Activated CD8-positive, alpha-beta T cell treated with anti-CD3 and anti-CD28 coated beads, Interleukin-2, amount 10 ng/mL, durations not matched to agents 7 days and 5 days (primary cell): ENCODE measurements at regions of chrX and their contacts with region 1.

Region 1: DNA sequence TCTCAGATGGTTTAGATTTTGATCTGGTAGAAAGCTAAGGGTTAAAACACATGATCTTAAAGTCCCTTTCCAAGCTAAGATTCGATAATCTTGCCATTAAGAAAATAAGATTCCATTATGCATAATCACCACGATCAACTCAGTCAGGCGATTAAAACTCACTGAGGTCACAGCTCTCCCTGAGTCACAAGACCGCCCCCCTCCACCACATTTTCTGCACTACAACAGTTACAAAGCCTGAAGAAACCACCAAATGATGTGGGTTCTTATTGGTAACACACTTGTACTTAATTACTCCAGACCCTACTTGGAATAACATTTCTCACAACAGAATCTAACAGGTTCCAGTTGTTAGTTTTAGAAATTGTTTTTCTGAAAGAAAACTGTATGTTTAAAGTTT is 62.8 kb downstream of the SH3KBP1 start:
- DNase-seq: peak; percentile 37
- ATAC-seq: peak; percentile 39
- H3K4me3 Mint-ChIP-seq: no peak overlapping the region
- H3K27ac Mint-ChIP-seq: no peak overlapping the region
- H3K4me1 Mint-ChIP-seq: peaks cover 39% of the 10 kb centered on the region
- H3K27me3 Mint-ChIP-seq: no peaks in the 10 kb centered on the region

Region 2: DNA sequence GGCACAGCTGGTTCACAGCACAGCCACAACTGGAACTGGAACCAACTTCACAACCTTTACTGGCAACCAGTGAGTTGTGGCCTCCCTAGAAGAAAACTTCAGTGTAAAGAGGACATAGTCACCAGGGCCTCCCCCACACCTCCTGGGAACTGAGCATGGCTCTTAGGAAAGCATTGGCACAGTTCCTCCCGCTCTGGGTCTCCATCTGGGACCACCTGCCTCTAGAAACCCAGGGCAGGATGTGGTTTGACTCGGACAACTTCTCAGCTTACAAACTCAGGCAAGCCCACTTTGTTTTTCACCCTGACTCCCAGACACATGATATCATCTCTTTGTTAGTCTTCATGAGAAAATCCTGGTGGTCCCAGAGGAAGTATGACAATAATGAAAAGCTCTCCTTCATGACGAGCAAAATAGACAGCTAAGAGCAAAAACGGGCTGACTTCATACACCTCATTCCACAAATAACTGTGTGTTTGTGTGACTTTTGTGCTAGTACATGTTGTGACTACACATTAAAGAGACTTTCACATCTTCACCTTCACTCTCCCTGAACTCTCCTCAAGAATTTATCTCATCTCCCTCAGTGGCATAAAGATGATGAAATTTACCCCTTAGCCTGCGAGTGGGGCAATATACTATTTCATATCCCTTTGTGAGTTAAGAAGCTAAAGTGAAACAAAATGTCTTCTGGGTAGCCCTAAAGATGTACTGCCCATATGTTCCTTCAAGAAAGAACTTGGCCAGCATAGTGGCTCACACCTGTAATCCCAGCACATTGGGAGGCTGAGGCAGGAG is 12.6 kb before region 1 on chrX:
- CTCF ChIA-PET with region 1: interaction called, 12 read pairs
- POLR2A ChIA-PET with region 1: no interaction called
- DNase-seq: no peak
- ATAC-seq: peak; percentile 56
- H3K4me3 Mint-ChIP-seq: no peak overlapping the region
- H3K27ac Mint-ChIP-seq: peak overlapping the region; percentile 71
- H3K4me1 Mint-ChIP-seq: peaks cover 75% of the 10 kb centered on the region
- H3K27me3 Mint-ChIP-seq: no peaks in the 10 kb centered on the region